ENCODE measurements at regions of chr5 and their contacts with region 1.

Region 1: DNA sequence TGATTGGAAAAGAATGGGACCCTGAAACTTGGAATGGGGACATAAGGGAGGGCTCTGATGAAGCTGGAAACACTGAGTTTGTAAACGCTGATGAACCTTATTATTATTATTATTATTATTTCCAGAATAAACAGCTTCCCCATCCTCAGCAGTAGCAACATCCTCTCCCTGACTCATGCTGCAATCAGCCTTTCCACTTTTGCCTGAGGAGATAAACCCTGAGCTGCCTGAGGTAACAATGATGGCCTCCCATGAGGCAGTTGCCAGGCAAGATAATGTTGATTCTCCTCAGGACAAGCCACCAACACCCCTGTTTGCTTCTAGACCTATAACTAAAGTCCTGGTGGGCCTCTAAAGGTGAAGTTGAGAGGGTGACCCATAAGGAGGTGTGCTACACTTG is 139.2 kb upstream of the ATP10B start:
- DNase-seq: no peak
- ATAC-seq: no peak
- H3K4me3 ChIP-seq: no peak overlapping the region
- H3K4me3 Mint-ChIP-seq: no peak overlapping the region
- H3K27ac ChIP-seq: no peak overlapping the region
- H3K27ac Mint-ChIP-seq: no peak overlapping the region
- H3K4me1 ChIP-seq: no peaks in the 10 kb centered on the region
- H3K4me1 Mint-ChIP-seq: no peaks in the 10 kb centered on the region
- H3K27me3 ChIP-seq: no peaks in the 10 kb centered on the region
- H3K27me3 Mint-ChIP-seq: no peaks in the 10 kb centered on the region
- CTCF ChIP-seq: no peak

Region 2: DNA sequence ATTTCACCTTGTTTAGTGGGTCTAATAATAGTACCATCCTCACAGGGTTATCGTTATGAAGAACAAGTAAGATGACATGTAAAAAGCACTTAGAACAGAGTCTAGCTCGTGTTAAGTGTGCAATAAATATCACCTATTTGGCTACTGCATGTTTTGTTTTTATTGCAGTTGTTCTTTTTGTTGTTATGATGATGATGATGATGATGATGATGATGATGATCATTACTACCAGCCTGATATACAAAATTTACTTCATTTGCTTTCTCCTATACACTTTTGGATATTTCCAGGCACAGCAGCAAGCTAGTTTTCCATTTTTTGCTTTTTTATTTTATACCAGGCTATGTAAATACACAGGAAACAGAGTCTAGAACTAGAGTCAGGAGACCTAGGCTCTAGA is 23.5 kb after region 1 on chr5:
- intact Hi-C with region 1: loop called (anchors 1 kb)
- DNase-seq: no peak
- ATAC-seq: no peak
- H3K4me3 ChIP-seq: no peak overlapping the region
- H3K4me3 Mint-ChIP-seq: no peak overlapping the region
- H3K27ac ChIP-seq: no peak overlapping the region
- H3K27ac Mint-ChIP-seq: no peak overlapping the region
- H3K4me1 ChIP-seq: no peaks in the 10 kb centered on the region
- H3K4me1 Mint-ChIP-seq: no peaks in the 10 kb centered on the region
- H3K27me3 ChIP-seq: no peaks in the 10 kb centered on the region
- H3K27me3 Mint-ChIP-seq: no peaks in the 10 kb centered on the region
- CTCF ChIP-seq: no peak

Measured in natural killer cell (primary cell).